ENCODE measurements at regions of chr5 and their contacts with region 1.

Region 1: GRCh38 chr5:159156426-159157238 is 52.7 kb downstream of the RNF145 start:
- DNase-seq: peak; percentile 60
- CTCF ChIP-seq: peak; percentile 76

Region 2: DNA sequence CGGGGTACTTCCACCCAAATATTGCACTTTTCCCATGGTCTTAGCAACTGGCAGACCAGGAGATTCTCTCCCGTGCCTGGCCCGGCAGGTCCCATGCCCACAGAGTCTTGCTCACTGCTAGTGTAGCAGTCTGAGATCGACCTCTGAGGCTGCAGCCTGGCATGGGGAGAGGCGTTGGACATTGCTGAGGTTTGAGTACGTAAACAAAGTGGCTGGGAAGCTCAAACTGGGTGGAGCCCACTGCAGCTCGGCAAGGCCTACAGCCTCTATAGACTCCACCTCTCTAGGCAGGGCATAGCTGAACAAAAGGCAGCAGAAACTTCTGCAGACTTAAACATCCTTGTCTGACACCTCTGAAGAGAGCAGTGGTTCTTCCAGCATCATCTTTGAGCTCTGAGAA is 16.8 kb before region 1 on chr5:
- CTCF ChIA-PET with region 1: interaction called, 14 read pairs
- POLR2A ChIA-PET with region 1: no interaction called
- DNase-seq: no peak
- CTCF ChIP-seq: no peak

Region 3: DNA sequence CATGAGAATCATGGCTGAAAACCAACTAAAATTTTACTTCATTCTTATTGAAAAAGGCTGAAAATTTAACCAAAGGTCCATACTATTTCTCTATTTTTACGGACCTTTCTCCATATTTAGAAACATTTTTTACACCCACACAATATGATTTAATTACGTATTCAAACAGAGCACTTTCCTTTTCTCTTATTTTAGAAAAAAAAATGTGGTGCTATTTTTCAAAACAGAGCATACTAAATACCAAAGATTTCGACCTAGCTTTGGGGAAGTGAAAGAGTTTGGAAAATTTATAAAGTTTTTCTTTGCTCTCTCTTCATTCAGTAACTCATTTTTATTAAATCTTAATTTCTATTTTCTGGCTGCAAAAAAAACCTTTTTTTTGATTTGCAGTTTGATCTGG is 14.6 kb after region 1 on chr5:
- CTCF ChIA-PET with region 1: interaction called, 21 read pairs
- POLR2A ChIA-PET with region 1: no interaction called
- DNase-seq: no peak
- CTCF ChIP-seq: no peak

Region 4: GRCh38 chr5:159184858-159185381 is 28.3 kb after region 1 on chr5:
- CTCF ChIA-PET with region 1: interaction called, 21 read pairs
- POLR2A ChIA-PET with region 1: no interaction called
- DNase-seq: peak; percentile 24
- CTCF ChIP-seq: no peak

Region 5: GRCh38 chr5:159198063-159199036 is 41.7 kb after region 1 on chr5:
- CTCF ChIA-PET with region 1: interaction called, 21 read pairs
- POLR2A ChIA-PET with region 1: no interaction called
- DNase-seq: peak; percentile 72
- CTCF ChIP-seq: no peak

Region 6: GRCh38 chr5:159209438-159210305 is 53.0 kb after region 1 on chr5 and contains the start of gene RNF145:
- CTCF ChIA-PET with region 1: interaction called, 12 read pairs
- POLR2A ChIA-PET with region 1: no interaction called
- DNase-seq: peak; percentile 92
- CTCF ChIP-seq: no peak

Region 7: DNA sequence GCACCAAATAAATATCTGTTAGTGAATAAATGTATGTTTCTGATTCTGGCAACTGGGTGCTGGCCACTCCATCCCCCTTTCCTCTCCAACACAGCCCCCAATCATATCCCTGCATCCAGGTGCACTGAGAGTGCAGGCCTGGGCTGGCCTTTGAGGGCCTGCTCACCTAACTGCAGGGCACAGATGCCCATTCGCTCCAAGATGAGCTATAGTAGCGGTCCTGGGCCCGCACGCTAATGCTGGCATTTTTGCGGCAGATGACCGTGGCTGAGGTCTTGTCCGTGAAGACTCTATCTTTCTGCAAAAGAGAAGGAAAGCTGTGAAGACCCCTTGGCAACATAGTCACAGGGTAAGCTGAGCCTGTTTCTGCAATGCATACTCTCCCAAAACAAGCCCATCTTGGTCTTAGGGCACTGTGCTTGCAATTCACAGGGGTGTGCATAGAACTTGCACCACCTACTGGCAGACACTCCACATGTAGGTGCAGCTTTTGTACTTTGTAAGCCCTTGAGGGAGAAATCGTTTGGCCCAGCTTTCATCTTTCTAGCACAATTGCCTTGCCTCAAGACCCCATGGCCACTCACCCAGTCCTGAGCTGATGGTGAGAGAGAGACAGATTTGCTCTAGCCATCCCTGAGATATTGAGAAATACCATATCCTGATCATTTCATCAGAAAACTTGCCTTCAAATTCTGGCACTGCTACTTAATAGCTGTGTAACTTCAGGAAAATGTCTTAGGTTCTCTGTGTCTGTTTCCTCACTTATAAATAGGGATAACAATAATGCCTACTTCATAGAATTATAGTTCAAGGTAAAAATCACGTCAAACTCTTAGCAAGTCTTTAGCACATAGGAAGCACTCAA is 160.1 kb after region 1 on chr5:
- CTCF ChIA-PET with region 1: interaction called, 124 read pairs
- POLR2A ChIA-PET with region 1: no interaction called
- DNase-seq: peak; percentile 53
- CTCF ChIP-seq: peak; percentile 67

Measured in GM10248 (cell line).